ENCODE measurements at regions of chr11 and their contacts with region 1.

Region 1: GRCh38 chr11:65711785-65712632 is at the start of gene KAT5:
- DNase-seq: peak; percentile 95 to 99 (median 98)
- ATAC-seq: peak; percentile 83
- H3K4me3 ChIP-seq: peak within 1 kb of the TSS; percentile 92 to 99
- H3K4me3 Mint-ChIP-seq: peak within 1 kb of the TSS; percentile 95
- H3K27ac ChIP-seq: peak within 1 kb of the TSS; percentile 99 to 100
- H3K27ac Mint-ChIP-seq: peak within 1 kb of the TSS; percentile 100
- H3K4me1 ChIP-seq: peaks cover 14% of the 10 kb centered on the region
- H3K4me1 Mint-ChIP-seq: peaks cover 21% of the 10 kb centered on the region
- H3K27me3 ChIP-seq: no peaks in the 10 kb centered on the region
- H3K27me3 Mint-ChIP-seq: no peaks in the 10 kb centered on the region
- CTCF ChIP-seq: peak; percentile 95
- total RNA-seq, gene KAT5: 149 to 151 TPM

Region 2: DNA sequence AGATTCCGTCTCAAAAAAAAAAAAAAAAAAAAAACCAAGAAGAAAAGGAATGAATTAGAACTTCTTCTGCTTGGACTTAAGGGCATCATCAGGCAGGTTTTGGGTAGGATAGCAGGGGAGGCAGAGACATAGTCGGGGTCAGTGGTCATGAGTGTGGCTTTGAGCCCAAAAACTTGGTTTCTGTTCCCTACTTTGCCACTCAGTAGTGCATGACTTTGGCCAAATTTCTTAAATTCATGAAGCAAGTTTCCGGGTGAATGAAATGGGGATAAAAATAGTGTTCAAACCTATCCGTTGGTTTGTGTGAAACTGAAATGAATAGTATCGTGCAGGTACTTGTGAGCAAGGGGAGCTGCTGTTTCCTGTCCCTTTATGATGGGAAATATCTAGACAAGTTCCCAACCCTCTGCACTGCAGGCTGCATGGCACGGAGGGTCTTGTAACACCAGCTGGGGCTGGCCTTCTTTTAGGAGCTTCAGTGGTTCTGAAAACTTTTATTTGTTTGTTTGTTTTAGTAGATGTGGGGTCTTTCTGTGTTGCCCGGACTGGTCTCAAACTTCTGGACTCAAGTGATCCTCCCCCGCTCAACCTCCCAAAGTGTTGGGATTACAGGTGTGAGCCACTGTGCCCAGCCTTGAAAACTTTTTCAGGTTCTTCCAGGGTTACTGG is 271.0 kb before region 1 on chr11:
- CTCF ChIA-PET with region 1: no interaction called
- POLR2A ChIA-PET with region 1: no interaction called
- intact Hi-C with region 1: no loop called
- DNase-seq: peak in 1 of 9 experiments; percentile 30
- ATAC-seq: peak; percentile 49
- H3K4me3 ChIP-seq: no peak overlapping the region
- H3K4me3 Mint-ChIP-seq: peak overlapping the region; percentile 58
- H3K27ac ChIP-seq: peak overlapping the region in 1 of 2 experiments; percentile 35
- H3K27ac Mint-ChIP-seq: peak overlapping the region; percentile 82
- H3K4me1 ChIP-seq: peaks cover 10% of the 10 kb centered on the region
- H3K4me1 Mint-ChIP-seq: peaks cover 55% of the 10 kb centered on the region
- H3K27me3 ChIP-seq: no peaks in the 10 kb centered on the region
- H3K27me3 Mint-ChIP-seq: no peaks in the 10 kb centered on the region
- CTCF ChIP-seq: no peak

Region 3: GRCh38 chr11:65593518-65594298 is 118.3 kb before region 1 on chr11:
- CTCF ChIA-PET with region 1: no interaction called
- POLR2A ChIA-PET with region 1: no interaction called
- intact Hi-C with region 1: no loop called
- DNase-seq: peak in 7 of 9 experiments; percentile 48 to 74 (median 64)
- ATAC-seq: peak; percentile 56
- H3K4me3 ChIP-seq: no peak overlapping the region
- H3K4me3 Mint-ChIP-seq: no peak overlapping the region
- H3K27ac ChIP-seq: no peak overlapping the region
- H3K27ac Mint-ChIP-seq: no peak overlapping the region
- H3K4me1 ChIP-seq: peaks cover 12% of the 10 kb centered on the region
- H3K4me1 Mint-ChIP-seq: peaks cover 11% of the 10 kb centered on the region
- H3K27me3 ChIP-seq: no peaks in the 10 kb centered on the region
- H3K27me3 Mint-ChIP-seq: no peaks in the 10 kb centered on the region
- CTCF ChIP-seq: peak; percentile 59

Region 4: DNA sequence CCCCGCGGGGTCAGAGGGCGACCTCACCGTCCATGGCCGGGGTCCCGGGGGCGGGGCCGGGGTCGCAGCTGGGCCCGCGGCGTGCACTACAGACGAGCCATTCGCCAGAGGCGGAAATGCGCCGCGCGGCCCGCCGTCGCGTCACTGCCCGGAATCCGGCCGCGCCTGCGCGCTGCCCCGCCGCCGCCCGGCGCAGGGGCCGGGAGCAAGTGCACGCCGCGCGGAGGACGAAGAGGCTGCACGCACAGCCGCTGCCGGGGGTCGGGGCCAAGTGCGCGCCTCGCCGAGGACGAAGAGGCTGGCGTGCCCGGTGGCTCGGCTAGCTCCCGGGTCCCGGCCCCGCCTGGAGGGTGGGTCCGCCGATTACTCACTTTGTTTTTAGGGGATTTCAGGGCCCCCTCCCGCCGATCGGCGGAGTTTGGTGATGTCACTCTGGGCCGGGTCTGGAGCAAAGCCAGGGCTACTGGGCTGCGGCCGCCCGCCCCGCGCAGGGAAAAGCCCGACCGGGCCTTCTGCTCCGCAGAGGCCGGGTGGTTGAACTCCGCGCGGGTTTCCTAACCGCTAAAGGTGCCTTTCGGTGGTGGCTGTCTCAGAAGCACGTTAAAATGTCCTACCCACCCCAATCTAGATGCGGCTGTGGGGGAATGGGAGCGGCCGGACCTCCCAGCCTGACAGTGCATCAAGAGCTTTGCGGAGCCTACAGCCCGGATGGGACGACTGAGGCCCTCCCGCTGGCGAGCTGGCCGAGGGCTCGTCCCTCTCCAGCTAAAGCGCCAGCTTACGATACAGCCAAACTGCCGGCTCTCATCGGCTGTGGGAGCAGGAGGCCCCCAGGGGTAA is 49.0 kb before region 1 on chr11 and contains the start of gene RELA:
- CTCF ChIA-PET with region 1: interaction called, 8 read pairs
- POLR2A ChIA-PET with region 1: interaction called, 3 read pairs
- intact Hi-C with region 1: loop called in 1 of 2 experiments (anchors 5 kb)
- DNase-seq: peak; percentile 79 to 95 (median 89)
- ATAC-seq: peak; percentile 83
- H3K4me3 ChIP-seq: peak within 1 kb of the TSS; percentile 77 to 88
- H3K4me3 Mint-ChIP-seq: peak within 1 kb of the TSS; percentile 86
- H3K27ac ChIP-seq: peak within 1 kb of the TSS; percentile 92 to 98
- H3K27ac Mint-ChIP-seq: peak within 1 kb of the TSS; percentile 92
- H3K4me1 ChIP-seq: peaks cover 27% of the 10 kb centered on the region
- H3K4me1 Mint-ChIP-seq: peaks cover 38% of the 10 kb centered on the region
- H3K27me3 ChIP-seq: no peaks in the 10 kb centered on the region
- H3K27me3 Mint-ChIP-seq: no peaks in the 10 kb centered on the region
- CTCF ChIP-seq: no peak
- total RNA-seq, gene RELA: 380 to 384 TPM

Region 5: DNA sequence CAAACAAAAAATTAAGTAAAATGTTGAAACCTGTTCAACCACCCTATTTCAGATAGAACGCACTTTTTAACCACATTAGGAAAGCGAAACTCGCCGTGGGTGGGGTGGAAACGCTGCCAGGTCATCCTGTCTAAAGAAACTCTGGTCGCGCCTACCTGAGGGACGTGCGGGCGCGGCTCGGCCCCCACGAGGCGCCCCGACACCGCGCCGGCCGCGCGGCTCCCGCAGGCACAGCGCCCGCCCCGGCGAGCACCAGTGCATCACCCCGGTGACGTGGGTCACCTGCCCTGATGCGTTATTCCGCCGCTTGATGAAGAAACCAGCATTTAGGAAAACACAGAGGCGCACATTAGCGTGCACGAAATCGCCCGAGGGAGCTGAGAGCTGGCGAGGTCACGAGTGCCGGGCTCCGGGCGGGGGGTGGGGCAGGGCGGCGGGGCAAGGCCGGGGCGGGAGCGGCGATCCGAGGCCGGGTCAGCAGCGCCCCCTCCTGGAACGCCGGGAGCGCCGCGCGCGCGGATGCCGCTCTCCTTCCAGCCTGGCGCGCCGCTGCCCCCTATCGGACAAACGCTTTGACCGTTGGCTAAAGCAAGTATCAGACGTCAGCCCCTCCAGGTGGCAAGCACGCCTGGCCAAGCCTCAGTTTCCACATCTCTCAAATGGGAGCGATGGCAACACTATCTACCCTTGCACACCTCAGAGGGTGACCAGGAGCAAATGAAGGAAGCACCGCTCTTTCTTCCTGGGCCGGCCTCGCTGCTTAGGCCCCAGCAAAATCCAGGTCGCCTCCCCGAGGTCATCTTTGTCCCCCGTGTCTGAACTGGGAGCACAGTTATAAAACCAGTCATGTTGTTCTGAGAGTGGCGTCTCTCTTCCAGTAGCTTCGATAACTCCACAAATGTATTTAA is 106.1 kb after region 1 on chr11:
- CTCF ChIA-PET with region 1: interaction called, 26 read pairs
- POLR2A ChIA-PET with region 1: interaction called, 7 read pairs
- intact Hi-C with region 1: loop called (anchors 1 kb)
- DNase-seq: peak; percentile 89 to 99 (median 94)
- ATAC-seq: peak; percentile 93
- H3K4me3 ChIP-seq: peak overlapping the region; percentile 47 to 74
- H3K4me3 Mint-ChIP-seq: peak overlapping the region; percentile 80
- H3K27ac ChIP-seq: peak overlapping the region; percentile 62 to 65
- H3K27ac Mint-ChIP-seq: peak overlapping the region; percentile 67
- H3K4me1 ChIP-seq: peaks cover 12% of the 10 kb centered on the region
- H3K4me1 Mint-ChIP-seq: peaks cover 14% of the 10 kb centered on the region
- H3K27me3 ChIP-seq: no peaks in the 10 kb centered on the region
- H3K27me3 Mint-ChIP-seq: no peaks in the 10 kb centered on the region
- CTCF ChIP-seq: peak; percentile 100

Region 6: GRCh38 chr11:65919146-65920033 is 207.4 kb after region 1 on chr11 and contains the start of gene DRAP1:
- CTCF ChIA-PET with region 1: no interaction called
- POLR2A ChIA-PET with region 1: no interaction called
- intact Hi-C with region 1: loop called in 1 of 2 experiments (anchors 1 kb)
- DNase-seq: peak; percentile 98 to 100 (median 99)
- ATAC-seq: peak; percentile 89
- H3K4me3 ChIP-seq: peak within 1 kb of the TSS; percentile 94
- H3K4me3 Mint-ChIP-seq: peak within 1 kb of the TSS; percentile 91
- H3K27ac ChIP-seq: peak within 1 kb of the TSS; percentile 79 to 81
- H3K27ac Mint-ChIP-seq: peak within 1 kb of the TSS; percentile 93
- H3K4me1 ChIP-seq: peaks cover 41% of the 10 kb centered on the region
- H3K4me1 Mint-ChIP-seq: peaks cover 51% of the 10 kb centered on the region
- H3K27me3 ChIP-seq: no peaks in the 10 kb centered on the region
- H3K27me3 Mint-ChIP-seq: no peaks in the 10 kb centered on the region
- CTCF ChIP-seq: no peak
- total RNA-seq, gene DRAP1: 62.2 to 63.1 TPM

Region 7: DNA sequence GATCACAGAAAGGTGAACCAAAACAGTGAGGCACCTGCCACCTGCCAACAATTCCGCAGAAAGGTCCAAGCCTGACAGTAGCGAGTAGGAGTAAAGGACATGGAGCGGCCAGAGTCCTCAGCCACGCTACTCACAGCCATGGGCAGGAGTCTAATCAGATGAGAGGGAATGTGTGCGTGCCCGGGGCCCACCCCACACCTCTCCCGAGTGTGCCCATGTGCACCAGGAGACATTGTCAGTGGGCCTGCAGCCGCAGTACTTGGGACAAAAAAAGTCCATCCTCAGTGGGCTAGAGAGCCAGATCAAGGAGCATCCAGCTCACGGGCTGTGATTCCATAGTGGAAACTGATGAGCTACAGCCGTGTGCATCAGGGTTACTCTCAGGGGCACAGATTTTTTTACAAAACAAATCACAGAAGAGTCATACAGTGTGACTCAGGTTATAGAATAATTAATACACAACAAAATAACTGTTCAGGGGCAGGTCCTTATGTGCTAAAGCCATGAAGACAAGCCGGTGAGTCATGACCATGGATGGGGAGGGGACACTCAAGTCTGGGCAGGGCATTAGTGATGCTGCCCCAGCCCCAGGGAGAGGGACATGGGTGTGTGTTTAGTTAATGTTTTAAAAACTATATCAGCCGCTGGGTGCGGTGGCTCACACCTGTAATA is 261.6 kb after region 1 on chr11:
- CTCF ChIA-PET with region 1: no interaction called
- POLR2A ChIA-PET with region 1: no interaction called
- intact Hi-C with region 1: no loop called
- DNase-seq: no peak
- ATAC-seq: no peak
- H3K4me3 ChIP-seq: no peak overlapping the region
- H3K4me3 Mint-ChIP-seq: no peak overlapping the region
- H3K27ac ChIP-seq: no peak overlapping the region
- H3K27ac Mint-ChIP-seq: no peak overlapping the region
- H3K4me1 ChIP-seq: no peaks in the 10 kb centered on the region
- H3K4me1 Mint-ChIP-seq: peaks cover 4% of the 10 kb centered on the region
- H3K27me3 ChIP-seq: no peaks in the 10 kb centered on the region
- H3K27me3 Mint-ChIP-seq: no peaks in the 10 kb centered on the region
- CTCF ChIP-seq: no peak

Region 8: GRCh38 chr11:66022401-66023185 is 310.6 kb after region 1 on chr11:
- CTCF ChIA-PET with region 1: interaction called, 10 read pairs
- POLR2A ChIA-PET with region 1: no interaction called
- intact Hi-C with region 1: loop called in 1 of 2 experiments (anchors 1 kb)
- DNase-seq: peak; percentile 63 to 86 (median 80)
- ATAC-seq: peak; percentile 99
- H3K4me3 ChIP-seq: peak overlapping the region in 1 of 2 experiments; percentile 4
- H3K4me3 Mint-ChIP-seq: peak overlapping the region; percentile 43
- H3K27ac ChIP-seq: no peak overlapping the region
- H3K27ac Mint-ChIP-seq: no peak overlapping the region
- H3K4me1 ChIP-seq: peaks cover 7% of the 10 kb centered on the region
- H3K4me1 Mint-ChIP-seq: peaks cover 5% of the 10 kb centered on the region
- H3K27me3 ChIP-seq: no peaks in the 10 kb centered on the region
- H3K27me3 Mint-ChIP-seq: peaks cover 3% of the 10 kb centered on the region
- CTCF ChIP-seq: peak; percentile 97